Activated CD4-positive, alpha-beta memory T cell treated with anti-CD3 and anti-CD28 coated beads for 36 hours (primary cell): ENCODE measurements at regions of chr19 and their contacts with region 1.

Region 1: DNA sequence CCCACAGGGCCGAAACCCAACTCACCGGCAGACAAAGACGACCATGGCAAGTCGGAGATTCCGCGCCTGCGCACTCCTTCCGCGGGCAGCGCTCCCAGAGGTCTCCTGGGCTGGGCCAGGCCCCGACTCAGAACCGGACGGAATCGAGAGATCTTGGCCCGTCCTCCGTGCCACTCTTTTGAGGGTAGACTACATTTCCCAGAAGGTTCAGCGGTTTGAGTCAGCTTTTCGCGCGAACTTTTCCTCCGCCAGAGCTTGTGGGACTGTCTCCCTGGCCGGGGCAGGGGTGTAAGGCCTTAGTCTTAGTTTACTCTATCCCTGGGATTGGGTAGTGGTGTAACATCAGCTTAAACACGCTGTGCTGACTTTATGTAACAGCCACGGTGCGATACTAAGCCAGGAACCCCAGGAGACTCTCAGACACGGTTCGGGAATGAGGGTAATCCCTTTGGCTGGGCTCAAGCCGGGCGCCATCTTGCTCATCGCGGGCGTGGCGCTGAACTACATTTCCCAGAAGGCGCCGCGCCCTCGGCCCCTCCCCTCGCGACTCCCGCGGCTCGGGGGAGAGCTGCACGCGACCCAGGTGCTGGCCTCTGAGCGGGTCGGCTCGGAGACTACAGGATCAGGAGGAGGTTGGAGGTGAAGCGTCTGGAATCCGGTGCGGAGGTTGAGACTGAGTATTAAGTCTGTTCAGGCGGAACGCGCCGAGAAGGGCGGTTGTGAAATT is at the start of gene ZNF260:
- DNase-seq: peak; percentile 96
- H3K4me3 Mint-ChIP-seq: peak within 1 kb of the TSS; percentile 99
- H3K27ac Mint-ChIP-seq: peak within 1 kb of the TSS; percentile 95
- H3K4me1 Mint-ChIP-seq: peaks cover 21% of the 10 kb centered on the region
- H3K27me3 Mint-ChIP-seq: no peaks in the 10 kb centered on the region
- total RNA-seq, gene ZNF260: 3.7 TPM

Region 2: GRCh38 chr19:36378625-36379509 is 149.5 kb before region 1 on chr19 and contains the start of gene ZFP14:
- CTCF ChIA-PET with region 1: no interaction called
- POLR2A ChIA-PET with region 1: interaction called, 4 read pairs
- intact Hi-C with region 1: loop called (anchors 1 kb)
- DNase-seq: peak; percentile 97
- H3K4me3 Mint-ChIP-seq: peak within 1 kb of the TSS; percentile 91
- H3K27ac Mint-ChIP-seq: peak within 1 kb of the TSS; percentile 86
- H3K4me1 Mint-ChIP-seq: peaks cover 10% of the 10 kb centered on the region
- H3K27me3 Mint-ChIP-seq: no peaks in the 10 kb centered on the region
- total RNA-seq, gene ZFP14: 1.6 to 2.3 TPM

Region 3: DNA sequence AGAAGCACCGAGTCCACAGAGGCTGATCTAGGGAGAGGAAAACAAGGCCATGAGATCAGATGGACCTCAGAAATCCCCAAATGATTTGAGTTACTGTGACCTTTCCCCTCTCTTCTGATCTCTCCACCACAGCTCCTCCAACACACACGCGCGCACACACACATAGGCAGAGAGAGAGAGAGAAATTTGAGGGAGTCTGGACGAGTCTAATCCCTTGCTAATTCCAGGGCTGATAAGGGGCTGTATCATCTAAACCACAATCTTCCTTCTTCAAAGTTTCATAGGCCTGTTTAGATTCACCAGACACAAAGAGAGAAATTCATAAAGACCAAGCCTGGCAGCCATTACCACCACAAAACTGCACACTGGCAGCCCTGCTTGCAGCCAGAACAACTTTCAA is 118.5 kb before region 1 on chr19:
- CTCF ChIA-PET with region 1: no interaction called
- POLR2A ChIA-PET with region 1: no interaction called
- intact Hi-C with region 1: no loop called
- DNase-seq: no peak
- H3K4me3 Mint-ChIP-seq: no peak overlapping the region
- H3K27ac Mint-ChIP-seq: no peak overlapping the region
- H3K4me1 Mint-ChIP-seq: no peaks in the 10 kb centered on the region
- H3K27me3 Mint-ChIP-seq: no peaks in the 10 kb centered on the region

Region 4: DNA sequence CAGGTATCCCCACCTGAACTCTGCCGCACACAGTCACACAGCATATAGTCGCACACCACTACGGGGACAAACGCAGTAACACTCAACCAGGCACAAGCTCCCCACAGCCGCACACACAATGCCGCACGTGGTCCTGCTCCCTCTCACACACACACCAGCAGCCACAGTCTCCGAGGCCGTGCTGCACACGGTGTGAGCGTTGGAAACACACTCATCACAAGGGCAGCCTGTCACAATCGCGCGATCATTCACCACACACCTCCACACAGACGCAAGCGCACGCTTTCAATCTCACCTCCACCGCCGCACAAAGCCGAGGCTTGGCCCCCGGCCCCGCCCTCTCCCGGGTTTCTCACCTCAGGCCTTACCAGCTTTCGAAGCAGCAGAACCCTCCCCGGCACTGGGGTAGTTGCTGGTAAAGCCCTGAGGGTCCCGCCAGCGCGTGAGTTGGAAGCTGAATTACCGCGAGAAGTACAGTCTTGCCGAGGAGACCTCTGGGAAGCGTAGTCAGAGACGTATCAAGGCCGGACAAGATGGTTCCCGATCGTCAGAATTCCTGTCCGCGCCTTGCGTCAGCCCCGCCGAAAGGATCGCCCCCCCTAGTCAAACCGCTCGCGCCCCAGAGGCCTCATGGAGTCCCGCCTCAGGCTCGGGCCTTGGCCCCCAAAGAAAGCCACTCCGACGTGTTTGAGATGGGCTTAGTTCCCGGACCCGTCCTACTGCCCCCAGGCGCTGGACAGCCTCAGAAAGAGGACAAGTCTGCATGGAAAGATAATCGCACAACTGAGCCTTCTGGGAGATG is 39.0 kb before region 1 on chr19 and contains the start of gene ZNF566:
- CTCF ChIA-PET with region 1: no interaction called
- POLR2A ChIA-PET with region 1: interaction called, 17 read pairs
- intact Hi-C with region 1: loop called (anchors 1 kb)
- DNase-seq: peak; percentile 96
- H3K4me3 Mint-ChIP-seq: peak within 1 kb of the TSS; percentile 95
- H3K27ac Mint-ChIP-seq: peak within 1 kb of the TSS; percentile 99
- H3K4me1 Mint-ChIP-seq: peaks cover 23% of the 10 kb centered on the region
- H3K27me3 Mint-ChIP-seq: no peaks in the 10 kb centered on the region
- total RNA-seq, gene ZNF566: 3.8 to 4.6 TPM

Region 5: GRCh38 chr19:36605101-36605876 is 76.9 kb after region 1 on chr19 and contains the start of gene ZNF382:
- CTCF ChIA-PET with region 1: no interaction called
- POLR2A ChIA-PET with region 1: no interaction called
- intact Hi-C with region 1: loop called (anchors 1 kb)
- DNase-seq: peak; percentile 90
- H3K4me3 Mint-ChIP-seq: peak within 1 kb of the TSS; percentile 92
- H3K27ac Mint-ChIP-seq: peak within 1 kb of the TSS; percentile 95
- H3K4me1 Mint-ChIP-seq: peaks cover 24% of the 10 kb centered on the region
- H3K27me3 Mint-ChIP-seq: no peaks in the 10 kb centered on the region
- total RNA-seq, gene ZNF382: 10.9 to 14.8 TPM

Region 6: DNA sequence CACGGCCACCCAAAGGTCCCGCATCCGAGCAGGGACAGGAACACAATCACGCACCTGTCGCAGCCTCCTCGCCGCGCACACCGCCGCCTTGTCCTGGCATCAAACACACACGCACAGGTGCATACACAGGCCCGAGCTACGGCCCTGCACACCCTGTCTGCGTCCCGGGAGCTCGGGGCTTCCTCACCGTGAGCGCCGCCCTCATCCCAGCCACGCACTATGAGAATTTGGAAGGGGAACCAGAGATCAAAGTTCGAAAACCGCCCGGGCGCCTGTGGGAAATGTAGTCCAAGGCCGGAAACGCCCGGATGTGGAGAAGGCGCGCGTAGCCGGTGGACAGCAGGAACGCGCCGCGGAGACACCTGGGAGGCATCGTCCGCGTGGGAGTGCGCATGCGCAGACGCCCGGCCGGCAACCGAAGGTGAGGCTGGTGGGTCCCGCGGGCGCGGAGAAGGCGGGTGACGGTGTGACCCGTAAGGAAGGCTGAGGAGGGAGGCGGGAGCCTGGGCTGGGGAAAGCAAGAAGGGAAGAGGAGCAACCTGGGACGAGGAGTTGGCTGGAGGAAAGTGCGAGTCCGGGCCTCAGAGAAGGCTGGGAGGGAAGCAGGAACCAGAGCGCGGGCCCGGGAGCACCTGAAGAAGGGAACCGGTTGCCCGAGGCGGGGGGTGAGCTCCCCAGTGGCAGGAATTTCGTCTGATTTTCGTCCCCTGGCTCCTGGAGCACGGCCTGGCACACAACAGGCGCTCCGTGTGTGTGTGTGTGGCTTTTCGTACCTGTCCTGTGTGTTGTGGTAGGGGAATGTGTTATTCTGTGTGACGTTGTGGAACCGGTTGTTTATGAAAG is 159.1 kb after region 1 on chr19 and contains the start of gene ZNF567:
- CTCF ChIA-PET with region 1: no interaction called
- POLR2A ChIA-PET with region 1: no interaction called
- intact Hi-C with region 1: loop called (anchors 1 kb)
- DNase-seq: peak; percentile 99
- H3K4me3 Mint-ChIP-seq: peak within 1 kb of the TSS; percentile 99
- H3K27ac Mint-ChIP-seq: peak within 1 kb of the TSS; percentile 90
- H3K4me1 Mint-ChIP-seq: peaks cover 24% of the 10 kb centered on the region
- H3K27me3 Mint-ChIP-seq: no peaks in the 10 kb centered on the region
- total RNA-seq, gene ZNF567: 4.9 to 5.3 TPM

Region 7: DNA sequence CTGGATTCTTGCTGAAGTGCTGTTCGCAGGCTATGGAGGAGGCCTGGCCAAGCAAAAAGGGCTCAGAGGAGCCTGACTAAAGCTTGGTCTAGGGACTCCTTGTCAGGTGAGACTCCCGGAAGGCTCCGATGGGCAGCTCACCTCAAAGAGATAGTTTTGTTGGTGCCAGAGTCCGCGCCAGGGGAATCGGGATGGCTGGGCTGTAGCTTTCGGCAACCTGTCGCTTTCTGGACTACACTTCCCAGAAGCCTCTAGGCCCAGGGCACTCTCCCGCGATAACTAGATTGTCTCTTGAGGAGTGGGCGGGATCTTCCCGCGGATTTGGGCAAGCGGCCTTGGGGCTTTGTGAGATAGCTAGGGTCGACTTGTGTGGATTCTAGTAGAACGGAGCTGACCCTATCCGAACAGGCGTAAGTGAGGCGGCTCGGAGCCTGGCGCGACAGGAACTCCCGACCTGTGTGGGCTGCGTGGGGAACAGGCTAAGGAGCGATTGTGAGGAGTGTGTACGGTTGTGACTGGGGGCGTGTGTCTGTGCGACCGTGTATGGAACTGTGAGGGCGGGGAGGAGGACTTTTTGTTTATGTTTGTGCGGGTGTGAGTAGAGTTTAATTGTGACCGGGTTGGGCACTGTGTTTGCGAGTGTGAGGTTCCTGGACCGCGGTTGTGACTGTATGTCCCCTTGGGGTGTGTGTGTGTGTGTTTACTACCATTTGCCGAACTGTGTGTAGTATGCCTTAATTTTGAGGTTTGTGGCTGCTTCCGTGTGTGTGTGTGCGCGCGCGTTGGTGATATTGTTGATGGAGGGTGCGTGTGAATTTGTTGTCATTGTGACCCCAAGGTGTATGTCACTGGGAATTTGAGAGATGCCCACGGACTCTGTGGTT is 322.4 kb after region 1 on chr19 and contains the start of gene ZNF345:
- CTCF ChIA-PET with region 1: no interaction called
- POLR2A ChIA-PET with region 1: no interaction called
- intact Hi-C with region 1: loop called (anchors 1 kb)
- DNase-seq: peak; percentile 92
- H3K4me3 Mint-ChIP-seq: no peak within 1 kb of the TSS
- H3K27ac Mint-ChIP-seq: no peak within 1 kb of the TSS
- H3K4me1 Mint-ChIP-seq: peaks cover 12% of the 10 kb centered on the region
- H3K27me3 Mint-ChIP-seq: no peaks in the 10 kb centered on the region
- total RNA-seq, gene ZNF345: 3.8 to 4.2 TPM